B cell (primary cell): ENCODE measurements at regions of chr11 and their contacts with region 1.

Region 1: GRCh38 chr11:118907051-118908042 is 18.4 kb downstream of the BCL9L start:
- DNase-seq: peak; percentile 90
- ATAC-seq: peak; percentile 88
- H3K4me3 ChIP-seq: no peak overlapping the region
- H3K4me3 Mint-ChIP-seq: no peak overlapping the region
- H3K27ac ChIP-seq: no peak overlapping the region
- H3K27ac Mint-ChIP-seq: peak overlapping the region; percentile 74
- H3K4me1 ChIP-seq: peaks cover 34 to 55% of the 10 kb centered on the region in 2 donors
- H3K4me1 Mint-ChIP-seq: peaks cover 36% of the 10 kb centered on the region
- H3K27me3 ChIP-seq: no peaks in the 10 kb centered on the region
- H3K27me3 Mint-ChIP-seq: no peaks in the 10 kb centered on the region
- CTCF ChIP-seq: peak; percentile 87

Region 2: GRCh38 chr11:118689851-118690552 is 217.3 kb before region 1 on chr11:
- CTCF ChIA-PET with region 1: interaction called, 9 read pairs
- POLR2A ChIA-PET with region 1: no interaction called
- intact Hi-C with region 1: loop called (anchors 1 kb)
- DNase-seq: peak; percentile 88
- ATAC-seq: peak; percentile 94
- H3K4me3 ChIP-seq: peak overlapping the region in 4 of 5 experiments; percentile 36 to 67 (median 52)
- H3K4me3 Mint-ChIP-seq: peak overlapping the region; percentile 85
- H3K27ac ChIP-seq: peak overlapping the region in 1 of 2 donors; percentile 51
- H3K27ac Mint-ChIP-seq: peak overlapping the region; percentile 68
- H3K4me1 ChIP-seq: peaks cover 10 to 27% of the 10 kb centered on the region in 2 donors
- H3K4me1 Mint-ChIP-seq: peaks cover 20% of the 10 kb centered on the region
- H3K27me3 ChIP-seq: peaks cover 0 to 4% (median 0%) of the 10 kb centered on the region in 4 experiments
- H3K27me3 Mint-ChIP-seq: peaks cover 10% of the 10 kb centered on the region
- CTCF ChIP-seq: peak; percentile 96

Region 3: DNA sequence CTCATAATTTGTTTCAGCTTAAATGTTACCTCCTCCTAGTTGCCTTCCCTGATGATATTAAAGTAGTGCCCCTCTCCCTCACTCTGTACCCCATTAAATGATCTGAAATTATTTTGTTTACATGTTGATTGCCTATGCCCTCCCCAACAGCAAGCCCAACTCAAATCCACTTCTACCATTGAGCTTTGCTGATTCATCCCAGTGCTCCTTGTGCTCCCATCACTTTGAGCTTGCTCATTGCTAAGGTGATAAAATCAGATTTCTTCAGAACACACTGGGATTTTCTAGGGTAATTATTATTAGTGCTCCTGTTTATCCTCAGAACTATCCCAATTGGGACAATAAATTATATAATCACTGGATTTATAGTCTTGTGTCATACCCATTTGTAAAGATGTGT is 108.0 kb before region 1 on chr11:
- CTCF ChIA-PET with region 1: no interaction called
- POLR2A ChIA-PET with region 1: interaction called, 11 read pairs
- intact Hi-C with region 1: no loop called
- DNase-seq: no peak
- ATAC-seq: no peak
- H3K4me3 ChIP-seq: no peak overlapping the region
- H3K4me3 Mint-ChIP-seq: no peak overlapping the region
- H3K27ac ChIP-seq: no peak overlapping the region
- H3K27ac Mint-ChIP-seq: no peak overlapping the region
- H3K4me1 ChIP-seq: peaks cover 8 to 12% of the 10 kb centered on the region in 2 donors
- H3K4me1 Mint-ChIP-seq: peaks cover 29% of the 10 kb centered on the region
- H3K27me3 ChIP-seq: no peaks in the 10 kb centered on the region
- H3K27me3 Mint-ChIP-seq: no peaks in the 10 kb centered on the region
- CTCF ChIP-seq: no peak

Region 4: DNA sequence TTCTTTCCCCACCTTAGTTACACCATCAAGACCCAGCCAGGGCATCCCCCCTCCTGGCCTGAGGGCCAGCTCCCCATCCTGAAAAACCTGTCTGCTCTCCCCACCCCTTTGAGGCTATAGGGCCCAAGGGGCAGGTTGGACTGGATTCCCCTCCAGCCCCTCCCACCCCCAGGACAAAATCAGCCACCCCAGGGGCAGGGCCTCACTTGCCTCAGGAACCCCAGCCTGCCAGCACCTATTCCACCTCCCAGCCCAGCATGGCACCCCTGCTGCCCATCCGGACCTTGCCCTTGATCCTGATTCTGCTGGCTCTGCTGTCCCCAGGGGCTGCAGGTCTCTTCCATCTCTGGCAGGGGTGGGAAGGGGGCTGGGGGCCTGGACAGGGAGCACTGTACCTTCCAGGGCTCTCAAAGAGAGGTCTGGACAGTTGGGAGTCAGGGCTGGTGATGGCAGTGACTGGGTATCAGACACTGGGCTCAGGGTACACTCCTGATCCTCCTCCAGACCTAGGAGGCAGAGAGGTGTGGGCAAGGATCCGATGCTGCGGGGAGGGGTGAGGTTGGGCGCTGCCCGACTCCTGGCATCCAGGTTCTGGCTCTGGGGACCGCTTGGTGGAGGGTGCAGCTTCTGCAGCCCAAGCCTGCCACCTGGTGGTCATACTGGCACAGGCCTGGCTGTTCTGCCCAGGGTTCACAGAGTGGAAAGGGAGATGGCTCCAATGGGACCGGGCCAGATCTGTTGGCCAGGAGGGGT is 48.9 kb after region 1 on chr11 and contains the start of gene UPK2:
- CTCF ChIA-PET with region 1: interaction called, 37 read pairs
- POLR2A ChIA-PET with region 1: no interaction called
- intact Hi-C with region 1: no loop called
- DNase-seq: peak; percentile 89
- ATAC-seq: peak; percentile 99
- H3K4me3 ChIP-seq: no peak within 1 kb of the TSS
- H3K4me3 Mint-ChIP-seq: no peak within 1 kb of the TSS
- H3K27ac ChIP-seq: no peak within 1 kb of the TSS
- H3K27ac Mint-ChIP-seq: peak within 1 kb of the TSS; percentile 53
- H3K4me1 ChIP-seq: peaks cover 0 to 6% of the 10 kb centered on the region in 2 donors
- H3K4me1 Mint-ChIP-seq: peaks cover 5% of the 10 kb centered on the region
- H3K27me3 ChIP-seq: peaks cover 0 to 13% (median 0%) of the 10 kb centered on the region in 4 experiments
- H3K27me3 Mint-ChIP-seq: peaks cover 22% of the 10 kb centered on the region
- CTCF ChIP-seq: peak; percentile 94
- total RNA-seq, gene UPK2: not detected in 2 replicates